ENCODE measurements at regions of chr4 and their contacts with region 1.

Region 1: GRCh38 chr4:119314356-119314755 is 7.6 kb downstream of the FABP2 start:
- DNase-seq: peak in 1 of 2 donors; percentile 71
- H3K4me3 ChIP-seq: no peak overlapping the region
- H3K27ac ChIP-seq: peak overlapping the region in 1 of 2 donors; percentile 55
- H3K4me1 ChIP-seq: peaks cover 4 to 10% of the 10 kb centered on the region in 2 donors
- H3K27me3 ChIP-seq: no peaks in the 10 kb centered on the region
- CTCF ChIP-seq: peak; percentile 28 to 58 (median 43)

Region 2: GRCh38 chr4:119490335-119490734 is 176.0 kb after region 1 on chr4:
- intact Hi-C with region 1: loop called (anchors 2 kb)
- DNase-seq: no peak
- H3K4me3 ChIP-seq: no peak overlapping the region
- H3K27ac ChIP-seq: no peak overlapping the region
- H3K4me1 ChIP-seq: no peaks in the 10 kb centered on the region
- H3K27me3 ChIP-seq: no peaks in the 10 kb centered on the region
- CTCF ChIP-seq: peak in 1 of 3 experiments; percentile 27

Region 3: DNA sequence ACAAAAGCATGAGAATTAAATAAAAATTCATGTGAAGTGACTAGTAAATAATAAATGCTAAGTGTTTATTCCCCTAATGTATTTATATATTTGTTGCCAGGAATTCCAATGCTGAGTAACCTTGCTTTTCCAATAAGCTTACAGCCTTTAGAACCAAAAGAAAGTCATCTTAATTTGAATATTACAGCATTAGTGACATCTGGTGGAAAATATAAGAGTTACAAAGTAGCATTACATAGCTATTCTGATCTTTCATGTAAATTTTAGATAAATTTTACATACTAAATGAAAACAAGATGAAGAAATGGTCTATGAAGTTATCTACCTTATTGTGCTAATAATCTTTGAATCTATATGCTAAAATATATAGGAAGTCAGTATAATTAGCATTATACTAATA is 741.9 kb after region 1 on chr4:
- intact Hi-C with region 1: loop called (anchors 1 kb)
- DNase-seq: no peak
- H3K4me3 ChIP-seq: no peak overlapping the region
- H3K27ac ChIP-seq: peak overlapping the region in 1 of 2 donors; percentile 57
- H3K4me1 ChIP-seq: peaks cover 6 to 24% of the 10 kb centered on the region in 2 donors
- H3K27me3 ChIP-seq: no peaks in the 10 kb centered on the region
- CTCF ChIP-seq: peak; percentile 23 to 58 (median 40)